WTC11 (cell line): ENCODE measurements at regions of chr11 and their contacts with region 1.

Region 1: GRCh38 chr11:64246871-64247728 is at the start of gene PPP1R14B:
- DNase-seq: peak; percentile 95
- ATAC-seq: peak; percentile 55
- H3K4me3 Mint-ChIP-seq: peak within 1 kb of the TSS; percentile 88
- H3K27ac Mint-ChIP-seq: peak within 1 kb of the TSS; percentile 97
- H3K4me1 Mint-ChIP-seq: peaks cover 50% of the 10 kb centered on the region
- H3K27me3 Mint-ChIP-seq: no peaks in the 10 kb centered on the region
- CTCF ChIP-seq: no peak
- total RNA-seq, gene PPP1R14B: 435 to 471 TPM (median 458 TPM) in 3 replicates

Region 2: GRCh38 chr11:64185816-64186498 is 61.1 kb before region 1 on chr11 and contains the start of gene STIP1:
- CTCF ChIA-PET with region 1: interaction called, 13 read pairs
- POLR2A ChIA-PET with region 1: interaction called, 4 read pairs
- DNase-seq: peak; percentile 98
- ATAC-seq: peak; percentile 92
- H3K4me3 Mint-ChIP-seq: peak within 1 kb of the TSS; percentile 93
- H3K27ac Mint-ChIP-seq: peak within 1 kb of the TSS; percentile 96
- H3K4me1 Mint-ChIP-seq: peaks cover 37% of the 10 kb centered on the region
- H3K27me3 Mint-ChIP-seq: no peaks in the 10 kb centered on the region
- CTCF ChIP-seq: no peak
- total RNA-seq, gene STIP1: 291 to 296 TPM (median 296 TPM) in 3 replicates

Region 3: GRCh38 chr11:64225612-64226506 is 21.2 kb before region 1 on chr11 and contains the starts of genes NUDT22 and TRPT1:
- CTCF ChIA-PET with region 1: interaction called, 25 read pairs
- POLR2A ChIA-PET with region 1: interaction called, 13 read pairs
- DNase-seq: peak; percentile 89
- ATAC-seq: peak; percentile 54
- H3K4me3 Mint-ChIP-seq: peak within 1 kb of the TSS; percentile 81
- H3K27ac Mint-ChIP-seq: peak within 1 kb of the TSS; percentile 84
- H3K4me1 Mint-ChIP-seq: peaks cover 24% of the 10 kb centered on the region
- H3K27me3 Mint-ChIP-seq: no peaks in the 10 kb centered on the region
- CTCF ChIP-seq: no peak
- total RNA-seq, gene NUDT22: 59.1 to 64.4 TPM (median 60.1 TPM) in 3 replicates
- total RNA-seq, gene TRPT1: 52.3 to 58.8 TPM (median 53.2 TPM) in 3 replicates

Region 4: GRCh38 chr11:64263021-64263946 is 16.2 kb after region 1 on chr11:
- CTCF ChIA-PET with region 1: interaction called, 75 read pairs
- POLR2A ChIA-PET with region 1: interaction called, 25 read pairs
- DNase-seq: no peak
- ATAC-seq: peak; percentile 53
- H3K4me3 Mint-ChIP-seq: no peak overlapping the region
- H3K27ac Mint-ChIP-seq: peak overlapping the region; percentile 97
- H3K4me1 Mint-ChIP-seq: peaks cover 3% of the 10 kb centered on the region; the same call in 1 of the 2 replicates
- H3K27me3 Mint-ChIP-seq: no peaks in the 10 kb centered on the region
- CTCF ChIP-seq: no peak

Region 5: DNA sequence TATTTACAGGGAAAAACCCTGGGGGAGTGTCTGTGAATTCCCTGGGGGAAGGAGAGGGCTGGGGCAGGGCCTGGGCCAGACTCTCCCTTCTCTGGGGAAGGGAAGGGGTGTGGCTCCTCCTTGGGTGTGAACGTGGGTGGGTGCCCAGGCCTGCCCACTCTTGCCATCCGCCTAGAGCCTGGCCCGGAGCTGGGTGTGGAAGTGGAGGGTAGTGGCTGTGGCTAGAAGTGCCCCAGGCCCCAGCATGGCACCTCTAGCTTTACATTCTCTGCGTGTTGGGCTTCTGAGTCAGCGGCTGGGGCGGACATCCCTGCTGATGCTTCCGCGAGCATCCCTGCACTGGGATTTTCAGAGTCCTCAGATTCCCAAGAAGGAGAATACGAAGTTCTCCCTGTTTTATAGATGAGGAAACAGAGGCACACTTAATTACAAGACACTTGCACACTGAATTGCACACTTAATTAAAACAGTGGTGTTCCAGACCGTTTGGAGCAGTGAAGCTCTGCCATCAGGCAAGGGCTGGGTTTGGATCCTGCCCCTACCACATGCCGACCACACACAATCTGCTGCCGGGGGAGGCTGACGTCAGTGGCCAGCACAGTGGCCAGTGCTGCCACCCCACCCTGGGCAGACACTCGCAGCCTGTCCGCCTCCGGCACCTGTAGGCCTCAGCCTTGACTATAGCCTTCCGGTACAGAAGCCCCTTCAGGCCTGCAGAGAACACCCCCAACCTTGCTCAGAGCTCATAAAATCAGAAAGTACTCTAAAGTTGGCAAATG is 29.7 kb after region 1 on chr11:
- CTCF ChIA-PET with region 1: interaction called, 75 read pairs
- POLR2A ChIA-PET with region 1: interaction called, 3 read pairs
- DNase-seq: no peak
- ATAC-seq: no peak
- H3K4me3 Mint-ChIP-seq: no peak overlapping the region
- H3K27ac Mint-ChIP-seq: no peak overlapping the region
- H3K4me1 Mint-ChIP-seq: peaks cover 21% of the 10 kb centered on the region
- H3K27me3 Mint-ChIP-seq: no peaks in the 10 kb centered on the region
- CTCF ChIP-seq: no peak

Region 6: DNA sequence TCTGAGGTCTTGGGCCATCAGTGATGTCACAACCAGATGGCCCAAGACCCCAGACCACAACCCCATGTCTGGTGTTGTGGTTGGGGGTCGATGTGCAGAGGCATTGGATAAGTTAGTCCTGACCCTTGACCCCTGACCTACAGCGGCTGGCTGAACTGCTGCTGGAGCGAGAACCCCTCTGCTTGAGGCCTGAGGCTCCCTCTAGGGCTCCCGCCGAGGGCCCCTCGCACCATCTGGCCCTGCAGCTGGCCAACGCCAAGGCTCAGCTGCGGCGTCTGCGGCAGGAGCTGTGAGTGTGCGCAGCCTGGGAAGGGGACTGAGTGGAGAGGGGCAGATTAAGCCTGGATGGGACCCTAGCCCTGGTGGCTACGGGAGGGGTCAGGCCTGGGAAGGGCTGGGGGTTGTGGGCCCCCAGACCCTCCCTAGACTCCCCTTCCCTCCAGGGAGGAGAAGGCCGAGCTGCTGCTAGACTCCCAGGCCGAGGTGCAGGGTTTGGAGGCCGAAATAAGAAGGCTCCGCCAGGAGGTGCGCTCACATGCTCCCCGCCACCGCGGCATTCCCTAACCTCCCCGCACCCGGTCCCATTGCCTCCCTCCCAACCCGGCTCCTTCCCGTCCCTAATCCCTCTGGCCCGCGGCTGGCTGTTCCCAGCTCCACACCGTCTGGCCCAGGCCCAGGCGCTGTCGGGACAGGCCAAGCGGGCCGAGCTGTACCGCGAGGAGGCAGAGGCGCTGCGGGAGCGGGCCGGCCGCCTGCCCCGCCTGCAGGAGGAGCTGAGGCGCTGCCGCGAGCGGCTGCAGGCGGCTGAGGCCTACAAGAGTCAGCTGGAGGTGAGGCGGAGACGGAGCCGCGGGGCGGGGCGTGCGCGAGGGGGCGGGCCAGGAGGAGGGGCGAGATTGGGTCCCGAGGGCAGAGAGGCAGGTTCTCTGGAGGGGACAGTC is 95.0 kb after region 1 on chr11:
- CTCF ChIA-PET with region 1: interaction called, 14 read pairs
- POLR2A ChIA-PET with region 1: interaction called, 6 read pairs
- DNase-seq: peak; percentile 97
- ATAC-seq: peak; percentile 75
- H3K4me3 Mint-ChIP-seq: peak overlapping the region; percentile 69
- H3K27ac Mint-ChIP-seq: no peak overlapping the region
- H3K4me1 Mint-ChIP-seq: peaks cover 21% of the 10 kb centered on the region
- H3K27me3 Mint-ChIP-seq: peaks cover 30% of the 10 kb centered on the region
- CTCF ChIP-seq: no peak

Region 7: GRCh38 chr11:64659417-64660144 is 412.5 kb after region 1 on chr11:
- CTCF ChIA-PET with region 1: no interaction called
- POLR2A ChIA-PET with region 1: no interaction called
- DNase-seq: no peak
- ATAC-seq: no peak
- H3K4me3 Mint-ChIP-seq: no peak overlapping the region
- H3K27ac Mint-ChIP-seq: no peak overlapping the region
- H3K4me1 Mint-ChIP-seq: 0 out of 2 replicates have a peak, but pooled peaks cover 2% of the 10 kb centered on the region
- H3K27me3 Mint-ChIP-seq: peaks cover 3% of the 10 kb centered on the region; the same call in 1 of the 2 replicates
- CTCF ChIP-seq: no peak